ENCODE measurements at regions of chr3 and their contacts with region 1.

Region 1: DNA sequence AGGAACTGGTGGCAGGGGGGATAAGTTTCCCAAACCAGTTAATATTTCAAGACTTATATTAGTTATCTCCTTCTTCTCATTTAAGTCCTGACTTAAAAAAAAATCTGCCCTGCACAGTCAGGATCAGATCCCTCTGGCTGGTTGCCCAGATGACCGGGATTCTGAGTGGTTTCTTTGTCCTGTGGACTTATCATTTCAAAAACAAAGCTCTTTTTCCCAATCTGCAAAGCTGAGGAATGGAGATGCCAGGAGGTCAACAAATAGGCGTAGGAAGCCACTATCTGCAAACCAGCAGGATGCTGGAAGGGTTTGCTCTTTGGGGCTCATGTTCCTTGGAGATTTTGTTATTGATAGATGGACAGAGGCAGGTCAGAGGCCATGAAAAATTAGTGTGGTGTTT is 5.8 kb downstream of the C3orf20 start:
- DNase-seq: no peak
- ATAC-seq: no peak
- H3K4me3 ChIP-seq: no peak overlapping the region
- H3K27ac ChIP-seq: no peak overlapping the region
- H3K4me1 ChIP-seq: no peaks in the 10 kb centered on the region
- H3K27me3 ChIP-seq: no peaks in the 10 kb centered on the region
- CTCF ChIP-seq: no peak
- POLR2A ChIP-seq: no peak

Region 2: GRCh38 chr3:12729051-12729651 is 1951.6 kb before region 1 on chr3:
- intact Hi-C with region 1: no loop called
- DNase-seq: peak in 4 of 5 donors; percentile 59 to 75 (median 66)
- ATAC-seq: peak; percentile 83 to 95 (median 92)
- H3K4me3 ChIP-seq: no peak overlapping the region
- H3K27ac ChIP-seq: peak overlapping the region; percentile 22 to 85 (median 70)
- H3K4me1 ChIP-seq: peaks cover 0 to 22% (median 4%) of the 10 kb centered on the region in 12 donors
- H3K27me3 ChIP-seq: no peaks in the 10 kb centered on the region
- CTCF ChIP-seq: no peak
- POLR2A ChIP-seq: no peak

Region 3: GRCh38 chr3:14431892-14432834 is 248.6 kb before region 1 on chr3:
- intact Hi-C with region 1: no loop called
- DNase-seq: peak; percentile 85 to 95 (median 89)
- ATAC-seq: peak; percentile 80 to 88 (median 85)
- H3K4me3 ChIP-seq: peak overlapping the region in 2 of 12 donors; percentile 2 to 36
- H3K27ac ChIP-seq: peak overlapping the region; percentile 1 to 97 (median 65)
- H3K4me1 ChIP-seq: peaks cover 14 to 100% (median 67%) of the 10 kb centered on the region in 12 donors
- H3K27me3 ChIP-seq: no peaks in the 10 kb centered on the region
- CTCF ChIP-seq: no peak
- POLR2A ChIP-seq: no peak

Region 4: GRCh38 chr3:14774431-14774830 is 93.7 kb after region 1 on chr3:
- intact Hi-C with region 1: loop called in 3 of 10 experiments (anchors 2 to 5 kb)
- DNase-seq: no peak
- ATAC-seq: no peak
- H3K4me3 ChIP-seq: no peak overlapping the region
- H3K27ac ChIP-seq: no peak overlapping the region
- H3K4me1 ChIP-seq: no peaks in the 10 kb centered on the region
- H3K27me3 ChIP-seq: no peaks in the 10 kb centered on the region
- CTCF ChIP-seq: no peak
- POLR2A ChIP-seq: no peak

Region 5: DNA sequence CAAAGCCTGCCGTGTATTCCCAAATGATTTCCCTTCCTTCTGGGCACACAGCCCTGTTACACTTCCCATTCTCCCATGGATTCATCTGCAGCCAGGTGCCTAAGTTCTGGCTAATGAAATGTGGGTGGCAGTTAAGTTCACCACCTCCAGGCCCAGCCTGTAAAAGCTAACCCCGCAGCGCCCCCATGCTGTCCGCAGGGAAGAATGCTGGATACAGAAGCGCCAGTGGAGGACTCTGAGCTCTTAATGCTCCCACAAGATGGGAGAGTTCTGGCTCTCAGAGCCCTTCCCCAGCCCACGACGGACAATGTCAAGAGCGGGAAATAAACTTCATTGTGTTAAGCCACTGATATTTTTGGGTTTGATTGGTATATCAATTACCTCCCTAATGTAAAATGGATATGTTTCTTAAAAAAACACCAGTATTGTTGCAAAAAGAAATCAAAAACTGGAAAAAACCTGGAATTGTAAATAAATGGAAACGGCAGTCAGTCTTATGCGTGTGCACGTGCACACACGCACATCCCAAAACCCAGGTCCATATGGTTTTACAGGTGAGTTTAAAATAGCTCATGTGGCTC is 100.3 kb after region 1 on chr3:
- intact Hi-C with region 1: loop called in 4 of 10 experiments (anchors 2 to 5 kb)
- DNase-seq: peak in 4 of 5 donors; percentile 54 to 68 (median 56)
- ATAC-seq: peak; percentile 78 to 94 (median 87)
- H3K4me3 ChIP-seq: no peak overlapping the region
- H3K27ac ChIP-seq: no peak overlapping the region
- H3K4me1 ChIP-seq: peaks cover 0 to 12% (median 0%) of the 10 kb centered on the region in 12 donors
- H3K27me3 ChIP-seq: peaks cover 0 to 5% (median 0%) of the 10 kb centered on the region in 9 donors
- CTCF ChIP-seq: peak; percentile 31 to 75 (median 58)
- POLR2A ChIP-seq: no peak